ENCODE measurements at regions of chr13 and their contacts with region 1.

Region 1: GRCh38 chr13:99281811-99282263 is 23.7 kb upstream of the GPR18 start:
- DNase-seq: no peak
- H3K4me3 ChIP-seq: no peak overlapping the region
- H3K27ac ChIP-seq: peak overlapping the region; percentile 55
- H3K4me1 ChIP-seq: peaks cover 27% of the 10 kb centered on the region
- CTCF ChIP-seq: no peak

Region 2: DNA sequence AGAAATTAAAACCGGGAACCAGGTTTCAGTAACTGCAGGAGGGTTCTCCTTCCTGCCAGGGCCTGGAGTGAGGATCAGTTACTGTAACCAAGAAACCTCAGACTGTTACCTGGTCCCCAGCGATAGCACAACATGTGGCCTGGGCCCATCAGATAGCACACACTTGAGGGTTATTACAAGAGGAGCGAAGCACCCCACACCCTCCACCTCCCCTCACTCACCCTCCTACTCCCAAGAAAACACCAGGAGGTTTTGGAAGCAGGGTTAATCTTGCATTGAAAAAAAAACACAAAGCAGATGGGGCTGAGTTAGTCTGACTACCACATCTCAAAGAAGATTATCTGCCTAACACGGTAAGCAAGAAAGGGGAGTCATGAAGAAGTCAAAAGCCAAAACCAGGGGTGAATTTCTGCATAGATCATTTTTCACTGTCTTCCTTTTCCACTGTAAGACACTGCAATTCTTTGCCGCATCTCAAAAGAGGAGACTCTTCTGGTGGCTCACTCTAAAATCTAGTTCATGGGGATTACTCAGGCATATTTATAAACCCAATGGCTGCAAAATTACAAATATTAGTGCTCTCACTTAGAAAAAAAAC is 228.1 kb before region 1 on chr13:
- CTCF ChIA-PET with region 1: no interaction called
- POLR2A ChIA-PET with region 1: no interaction called
- intact Hi-C with region 1: no loop called
- DNase-seq: no peak
- H3K4me3 ChIP-seq: no peak overlapping the region
- H3K27ac ChIP-seq: no peak overlapping the region
- H3K4me1 ChIP-seq: peaks cover 64% of the 10 kb centered on the region
- CTCF ChIP-seq: no peak

Region 3: GRCh38 chr13:99228737-99229691 is 52.8 kb before region 1 on chr13:
- CTCF ChIA-PET with region 1: no interaction called
- POLR2A ChIA-PET with region 1: no interaction called
- intact Hi-C with region 1: no loop called
- DNase-seq: peak; percentile 95
- H3K4me3 ChIP-seq: peak overlapping the region; percentile 58
- H3K27ac ChIP-seq: peak overlapping the region; percentile 97
- H3K4me1 ChIP-seq: peaks cover 85% of the 10 kb centered on the region
- CTCF ChIP-seq: no peak

Region 4: GRCh38 chr13:99335603-99336002 is 53.8 kb after region 1 on chr13:
- CTCF ChIA-PET with region 1: no interaction called
- POLR2A ChIA-PET with region 1: no interaction called
- intact Hi-C with region 1: loop called (anchors 5 kb)
- DNase-seq: peak; percentile 53
- H3K4me3 ChIP-seq: no peak overlapping the region
- H3K27ac ChIP-seq: peak overlapping the region; percentile 15
- H3K4me1 ChIP-seq: peaks cover 43% of the 10 kb centered on the region
- CTCF ChIP-seq: no peak

Region 5: GRCh38 chr13:99374994-99375737 is 93.3 kb after region 1 on chr13:
- CTCF ChIA-PET with region 1: no interaction called
- POLR2A ChIA-PET with region 1: no interaction called
- intact Hi-C with region 1: loop called (anchors 5 kb)
- DNase-seq: peak; percentile 44
- H3K4me3 ChIP-seq: no peak overlapping the region
- H3K27ac ChIP-seq: peak overlapping the region; percentile 7
- H3K4me1 ChIP-seq: peaks cover 36% of the 10 kb centered on the region
- CTCF ChIP-seq: no peak

Region 6: DNA sequence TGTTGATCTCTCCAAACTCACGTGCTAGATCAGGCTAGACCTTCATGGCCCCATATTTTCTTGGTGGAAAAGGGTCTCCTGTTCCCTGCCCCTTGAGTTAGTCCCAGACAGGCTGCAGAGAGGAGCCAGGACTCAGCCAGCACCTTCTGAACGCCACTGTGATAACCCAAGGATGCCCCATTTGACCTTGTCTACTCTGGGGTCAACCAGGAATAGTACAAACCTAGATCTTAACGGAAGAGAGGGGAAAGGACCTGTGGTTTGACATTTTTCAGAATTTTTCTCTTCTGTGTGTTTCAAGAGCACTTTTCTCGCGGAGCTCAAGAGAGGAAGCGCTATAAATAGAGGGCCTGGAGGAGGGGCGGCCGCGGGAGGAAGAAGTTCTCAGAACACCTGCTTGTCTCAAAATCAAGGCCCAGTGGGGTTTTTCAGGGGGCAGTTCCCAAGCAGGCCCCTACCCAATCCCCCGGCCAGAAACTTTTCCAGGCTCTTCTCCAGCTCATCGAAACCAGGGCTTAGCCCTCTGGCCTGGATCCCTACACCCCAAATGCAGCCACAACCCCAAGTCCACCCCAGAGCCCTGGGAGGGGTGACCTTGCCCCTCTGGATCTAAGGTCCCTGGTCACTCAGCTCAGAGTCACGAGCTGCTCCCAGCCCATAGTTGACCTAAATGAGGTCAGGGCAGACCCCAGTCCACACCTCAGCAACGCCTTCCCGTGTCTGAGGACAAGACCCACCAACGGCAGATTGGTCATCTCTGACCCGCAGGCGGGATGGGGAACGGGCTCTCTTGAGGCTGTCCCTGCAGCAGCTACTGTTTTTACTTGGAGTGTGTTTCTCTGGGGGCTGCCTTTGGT is 143.9 kb after region 1 on chr13:
- CTCF ChIA-PET with region 1: no interaction called
- POLR2A ChIA-PET with region 1: no interaction called
- intact Hi-C with region 1: loop called (anchors 5 kb)
- DNase-seq: peak; percentile 82
- H3K4me3 ChIP-seq: peak overlapping the region; percentile 48
- H3K27ac ChIP-seq: peak overlapping the region; percentile 93
- H3K4me1 ChIP-seq: peaks cover 50% of the 10 kb centered on the region
- CTCF ChIP-seq: no peak